Activated CD4-positive, alpha-beta T cell treated with anti-CD3 and anti-CD28 coated beads for 36 hours (primary cell): ENCODE measurements at regions of chr20 and their contacts with region 1.

Region 1: DNA sequence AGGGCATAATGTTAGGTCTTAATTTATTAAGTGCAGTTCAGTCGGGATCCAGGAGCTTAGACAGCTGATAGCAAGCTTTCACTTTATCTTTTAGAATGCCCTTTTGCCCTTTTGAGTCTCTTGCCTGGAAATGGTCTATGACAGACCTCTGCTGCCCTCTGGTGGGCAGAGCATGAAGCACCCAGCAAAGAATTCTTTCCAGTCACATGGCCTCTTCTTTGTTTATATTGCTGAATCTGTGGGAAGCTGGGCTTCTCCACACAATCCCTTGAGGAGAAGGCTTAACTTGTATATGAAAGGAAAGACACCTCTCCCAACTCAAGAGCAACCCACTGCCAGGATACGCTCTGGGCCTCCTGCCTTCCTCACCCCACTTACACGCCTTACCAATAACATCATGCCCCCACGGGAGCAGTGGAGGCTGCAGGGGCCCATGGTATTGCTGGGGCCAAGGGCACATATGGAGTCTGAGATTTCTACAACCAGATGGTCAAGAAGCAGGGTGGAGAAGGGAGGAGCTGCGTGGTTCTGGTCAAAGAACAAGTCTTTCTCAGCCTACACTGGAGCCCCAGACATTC is 20.4 kb downstream of the WFDC3 start:
- DNase-seq: peak; percentile 88
- ATAC-seq: peak; percentile 75
- H3K4me3 Mint-ChIP-seq: no peak overlapping the region
- H3K27ac Mint-ChIP-seq: no peak overlapping the region
- H3K4me1 Mint-ChIP-seq: peaks cover 4% of the 10 kb centered on the region
- H3K27me3 Mint-ChIP-seq: peaks cover 12% of the 10 kb centered on the region

Region 2: DNA sequence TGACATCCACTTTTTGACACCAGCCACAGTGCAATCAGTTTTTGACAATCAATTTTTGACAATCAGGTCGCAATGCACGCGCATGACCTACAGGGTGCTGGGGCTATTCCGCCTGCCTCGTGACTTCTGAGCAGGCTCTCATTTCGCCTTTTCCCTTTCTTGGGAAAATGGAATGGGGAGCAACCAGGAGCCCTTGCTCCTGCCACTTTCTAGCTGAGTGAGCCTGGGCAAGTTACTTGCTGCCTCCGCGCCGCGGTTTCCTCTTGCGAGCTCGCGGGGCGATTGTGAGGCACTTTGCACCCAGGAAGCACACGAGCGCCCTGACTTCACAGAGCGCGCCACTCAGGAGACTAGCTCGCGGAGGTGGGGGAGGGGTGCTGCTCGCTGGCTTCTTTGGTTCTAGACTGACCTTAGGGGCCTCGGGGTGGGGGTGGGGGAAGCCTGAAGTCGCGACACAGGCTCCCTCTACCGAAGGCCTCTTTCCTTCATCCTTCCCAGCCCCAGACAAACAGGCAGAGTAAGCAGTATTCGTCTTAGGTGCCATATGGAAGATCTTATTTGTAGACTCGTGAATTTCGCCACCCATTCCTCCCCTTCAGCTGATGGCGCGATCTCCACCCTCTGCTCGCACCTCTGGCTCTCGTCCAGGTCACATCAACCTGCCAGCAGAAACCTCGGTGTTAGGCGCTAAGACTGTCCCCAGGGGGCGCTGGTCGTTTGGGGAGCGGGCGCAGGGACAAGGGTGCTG is 397.7 kb before region 1 on chr20:
- CTCF ChIA-PET with region 1: interaction called, 9 read pairs
- POLR2A ChIA-PET with region 1: no interaction called
- intact Hi-C with region 1: loop called in 1 of 2 experiments (anchors 1 kb)
- DNase-seq: peak; percentile 96
- ATAC-seq: peak; percentile 97
- H3K4me3 Mint-ChIP-seq: peak overlapping the region; percentile 75
- H3K27ac Mint-ChIP-seq: peak overlapping the region; percentile 91
- H3K4me1 Mint-ChIP-seq: peaks cover 29% of the 10 kb centered on the region
- H3K27me3 Mint-ChIP-seq: no peaks in the 10 kb centered on the region

Region 3: DNA sequence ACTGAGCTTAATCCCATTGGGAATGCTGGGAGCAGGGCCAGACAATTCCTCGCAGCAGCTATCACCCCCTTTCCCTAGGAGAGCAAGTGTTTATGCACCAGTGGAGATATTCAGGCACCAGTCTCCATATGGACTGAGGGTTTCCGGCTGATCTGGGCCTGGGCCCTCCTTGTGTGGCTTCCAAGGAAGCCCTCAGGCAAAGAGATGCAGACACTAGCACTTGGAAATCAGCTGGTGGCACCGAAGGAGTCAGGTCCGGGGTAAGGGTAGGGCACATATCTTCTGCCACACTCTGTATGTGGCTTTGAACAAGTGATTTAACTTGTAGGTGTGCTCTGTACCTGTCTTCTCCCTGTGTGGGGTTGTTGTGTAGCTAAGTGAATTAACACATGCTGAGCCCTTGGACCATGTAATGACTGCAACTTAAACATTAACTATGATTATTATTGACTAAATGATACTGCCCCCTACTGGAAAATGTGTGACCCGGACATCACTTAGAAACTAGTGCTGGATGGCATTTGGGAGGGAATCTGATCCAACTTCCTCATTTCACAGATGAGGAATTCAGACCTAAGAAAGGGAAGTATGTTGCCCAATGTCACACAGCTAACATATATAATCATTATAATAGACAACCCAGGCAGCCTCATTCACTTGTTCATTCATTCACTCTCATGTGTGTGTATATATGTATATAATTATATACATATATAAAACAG is 321.0 kb before region 1 on chr20:
- CTCF ChIA-PET with region 1: interaction called, 34 read pairs
- POLR2A ChIA-PET with region 1: no interaction called
- intact Hi-C with region 1: no loop called
- DNase-seq: peak; percentile 24
- ATAC-seq: peak; percentile 53
- H3K4me3 Mint-ChIP-seq: no peak overlapping the region
- H3K27ac Mint-ChIP-seq: no peak overlapping the region
- H3K4me1 Mint-ChIP-seq: peaks cover 2% of the 10 kb centered on the region
- H3K27me3 Mint-ChIP-seq: peaks cover 4% of the 10 kb centered on the region

Region 4: DNA sequence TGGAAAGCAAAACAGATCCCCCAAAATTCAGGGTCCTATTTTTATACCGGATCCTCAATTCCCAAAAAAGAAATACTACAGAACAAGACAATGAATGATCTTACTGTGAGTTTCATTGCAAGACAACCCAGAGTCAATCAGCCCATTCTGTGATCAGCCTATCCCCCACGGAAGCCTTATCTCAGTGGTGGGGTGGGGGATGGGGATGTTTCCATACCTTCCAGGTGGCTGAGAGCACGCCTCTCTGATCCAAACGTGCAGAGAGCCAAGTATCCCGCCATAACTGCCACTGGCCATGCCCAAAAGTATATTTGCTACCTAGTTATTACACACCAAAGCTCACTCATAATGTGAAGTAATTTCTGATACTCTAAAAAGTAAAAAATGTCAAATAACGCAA is 286.6 kb before region 1 on chr20:
- CTCF ChIA-PET with region 1: interaction called, 11 read pairs
- POLR2A ChIA-PET with region 1: no interaction called
- intact Hi-C with region 1: no loop called
- DNase-seq: no peak
- ATAC-seq: no peak
- H3K4me3 Mint-ChIP-seq: no peak overlapping the region
- H3K27ac Mint-ChIP-seq: no peak overlapping the region
- H3K4me1 Mint-ChIP-seq: no peaks in the 10 kb centered on the region
- H3K27me3 Mint-ChIP-seq: peaks cover 34% of the 10 kb centered on the region

Region 5: DNA sequence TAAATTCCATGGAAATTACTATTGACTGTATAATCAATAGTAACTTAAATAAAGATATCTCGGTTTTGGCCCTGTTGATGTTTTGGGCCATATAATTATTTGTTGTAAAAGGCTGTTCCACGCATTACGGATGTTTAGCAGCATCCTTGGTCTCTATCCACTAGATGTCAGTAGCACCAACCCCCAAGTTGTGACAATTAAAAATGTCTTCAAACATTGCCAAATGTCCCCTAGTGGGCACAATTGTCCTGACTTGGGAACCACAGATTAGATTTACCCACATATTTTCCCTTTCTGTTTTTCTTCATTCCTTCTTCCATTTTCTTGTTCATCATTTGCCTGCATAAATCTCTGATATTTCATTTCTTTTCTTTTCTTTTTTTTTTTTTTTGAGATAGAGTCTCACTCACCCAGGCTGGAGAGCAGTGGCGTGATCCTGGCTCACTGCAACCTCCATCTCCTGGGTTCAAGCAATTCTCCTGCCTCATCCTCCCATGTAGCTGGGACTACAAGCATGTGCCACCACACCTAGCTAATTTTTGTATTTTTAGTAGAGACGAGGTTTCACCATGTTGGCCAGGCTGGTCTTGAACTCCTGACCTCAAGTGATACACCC is 178.6 kb before region 1 on chr20:
- CTCF ChIA-PET with region 1: interaction called, 44 read pairs
- POLR2A ChIA-PET with region 1: no interaction called
- intact Hi-C with region 1: loop called (anchors 1 kb)
- DNase-seq: peak; percentile 48
- ATAC-seq: peak; percentile 78
- H3K4me3 Mint-ChIP-seq: no peak overlapping the region
- H3K27ac Mint-ChIP-seq: no peak overlapping the region
- H3K4me1 Mint-ChIP-seq: no peaks in the 10 kb centered on the region
- H3K27me3 Mint-ChIP-seq: peaks cover 24% of the 10 kb centered on the region

Region 6: GRCh38 chr20:45629496-45630100 is 141.7 kb before region 1 on chr20 and contains the start of gene WFDC10A:
- CTCF ChIA-PET with region 1: interaction called, 44 read pairs
- POLR2A ChIA-PET with region 1: no interaction called
- intact Hi-C with region 1: loop called (anchors 1 to 2 kb)
- DNase-seq: peak; percentile 53
- ATAC-seq: peak; percentile 91
- H3K4me3 Mint-ChIP-seq: no peak within 1 kb of the TSS
- H3K27ac Mint-ChIP-seq: no peak within 1 kb of the TSS
- H3K4me1 Mint-ChIP-seq: peaks cover 4% of the 10 kb centered on the region
- H3K27me3 Mint-ChIP-seq: peaks cover 39% of the 10 kb centered on the region
- total RNA-seq, gene WFDC10A: not detected

Region 7: GRCh38 chr20:45798935-45799642 is 27.8 kb after region 1 on chr20:
- CTCF ChIA-PET with region 1: interaction called, 11 read pairs
- POLR2A ChIA-PET with region 1: no interaction called
- intact Hi-C with region 1: no loop called
- DNase-seq: peak; percentile 79
- ATAC-seq: peak; percentile 95
- H3K4me3 Mint-ChIP-seq: no peak overlapping the region
- H3K27ac Mint-ChIP-seq: peak overlapping the region; percentile 45
- H3K4me1 Mint-ChIP-seq: peaks cover 7% of the 10 kb centered on the region
- H3K27me3 Mint-ChIP-seq: no peaks in the 10 kb centered on the region

Region 8: GRCh38 chr20:46220455-46221204 is 449.4 kb after region 1 on chr20:
- CTCF ChIA-PET with region 1: no interaction called
- POLR2A ChIA-PET with region 1: no interaction called
- intact Hi-C with region 1: no loop called
- DNase-seq: no peak
- ATAC-seq: no peak
- H3K4me3 Mint-ChIP-seq: no peak overlapping the region
- H3K27ac Mint-ChIP-seq: no peak overlapping the region
- H3K4me1 Mint-ChIP-seq: no peaks in the 10 kb centered on the region
- H3K27me3 Mint-ChIP-seq: no peaks in the 10 kb centered on the region